ENCODE measurements at regions of chr14 and their contacts with region 1.

Region 1: DNA sequence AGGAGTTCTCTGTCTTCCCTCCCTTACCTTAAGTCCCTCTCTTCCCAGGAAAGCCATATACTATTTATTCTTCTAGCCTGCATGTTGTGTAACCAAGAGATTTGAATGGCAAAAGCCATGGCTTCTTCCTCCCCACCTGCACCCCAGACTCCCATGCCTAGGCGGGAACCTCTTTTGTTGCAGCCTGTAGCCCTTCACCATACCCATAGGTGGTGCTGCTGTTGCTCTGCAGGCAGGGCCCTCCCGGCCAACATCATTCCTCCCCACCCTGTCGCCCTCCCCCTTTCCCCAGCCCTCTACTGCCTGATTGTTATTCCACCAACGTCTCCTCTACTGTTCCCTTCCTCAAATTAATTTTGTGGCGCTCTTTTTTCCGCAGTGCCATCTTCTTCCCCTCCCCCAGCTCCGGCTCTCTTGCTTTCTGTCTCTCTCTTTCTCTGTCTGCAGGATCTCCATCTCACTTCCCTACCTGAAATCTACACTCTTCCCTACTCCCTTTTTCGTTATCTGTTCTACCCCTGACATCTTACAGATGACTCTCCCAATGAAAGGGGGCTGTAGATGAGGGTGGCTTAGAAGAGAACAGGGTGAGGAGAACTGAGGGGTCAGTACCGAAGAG is 13.8 kb downstream of the NGDN start:
- DNase-seq: no peak
- ATAC-seq: no peak
- H3K4me3 ChIP-seq: no peak overlapping the region
- H3K27ac ChIP-seq: no peak overlapping the region
- H3K4me1 ChIP-seq: peaks cover 0 to 4% (median 0%) of the 10 kb centered on the region in 12 donors
- H3K27me3 ChIP-seq: no peaks in the 10 kb centered on the region
- CTCF ChIP-seq: peak in 3 of 12 donors; percentile 22 to 27 (median 23)
- POLR2A ChIP-seq: no peak

Region 2: DNA sequence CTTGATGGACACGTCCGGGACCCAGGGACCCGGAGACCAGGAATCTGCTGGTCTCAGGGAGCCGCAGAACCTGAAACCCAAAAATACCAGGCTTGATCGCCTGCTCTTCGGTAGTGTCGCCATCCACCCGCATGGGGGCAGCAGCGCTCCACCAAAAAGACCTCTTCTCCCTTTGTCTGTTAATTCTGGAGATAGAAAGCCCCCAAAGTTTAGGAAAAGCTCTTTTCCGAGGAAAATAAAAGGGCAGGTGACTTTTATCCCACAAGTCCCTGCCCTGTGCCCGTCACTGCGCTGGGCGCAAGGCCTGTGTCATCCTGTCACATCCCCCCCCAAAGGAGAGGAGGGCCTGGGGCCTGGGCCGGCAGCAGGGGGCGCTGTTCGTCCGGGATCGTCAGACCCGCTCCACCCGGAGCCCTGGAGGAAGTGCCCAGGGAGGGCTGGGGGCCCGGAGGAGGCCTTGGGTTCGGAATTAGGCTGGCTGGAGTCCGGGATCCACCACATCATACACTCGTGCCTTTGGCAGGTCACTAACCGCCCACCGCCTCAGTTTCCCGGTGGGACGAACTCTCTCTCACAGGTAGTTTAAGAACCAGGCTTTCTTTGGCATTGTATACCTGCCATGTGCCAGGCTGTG is 926.2 kb before region 1 on chr14:
- intact Hi-C with region 1: no loop called
- DNase-seq: peak; percentile 76 to 95 (median 86)
- ATAC-seq: peak; percentile 84 to 89 (median 87)
- H3K4me3 ChIP-seq: peak overlapping the region in 10 of 12 donors; percentile 29 to 52 (median 42)
- H3K27ac ChIP-seq: peak overlapping the region in 11 of 12 donors; percentile 3 to 83 (median 55)
- H3K4me1 ChIP-seq: peaks cover 0 to 70% (median 30%) of the 10 kb centered on the region in 12 donors
- H3K27me3 ChIP-seq: no peaks in the 10 kb centered on the region
- CTCF ChIP-seq: peak in 10 of 12 donors; percentile 93 to 100 (median 98)
- POLR2A ChIP-seq: peak in 1 of 2 donors; percentile 22

Region 3: GRCh38 chr14:23057757-23058653 is 425.3 kb before region 1 on chr14:
- intact Hi-C with region 1: no loop called
- DNase-seq: peak; percentile 84 to 91 (median 88)
- ATAC-seq: peak; percentile 73 to 77 (median 74)
- H3K4me3 ChIP-seq: peak overlapping the region; percentile 46 to 84 (median 68)
- H3K27ac ChIP-seq: peak overlapping the region in 10 of 12 donors; percentile 39 to 77 (median 58)
- H3K4me1 ChIP-seq: peaks cover 0 to 39% (median 25%) of the 10 kb centered on the region in 12 donors
- H3K27me3 ChIP-seq: no peaks in the 10 kb centered on the region
- CTCF ChIP-seq: peak; percentile 92 to 96 (median 94)
- POLR2A ChIP-seq: no peak

Region 4: GRCh38 chr14:23539248-23540140 is 56.1 kb after region 1 on chr14:
- intact Hi-C with region 1: loop called in 1 of 10 experiments (anchors 10 kb)
- DNase-seq: no peak
- ATAC-seq: peak in 3 of 4 donors; percentile 61 to 70 (median 65)
- H3K4me3 ChIP-seq: no peak overlapping the region
- H3K27ac ChIP-seq: no peak overlapping the region
- H3K4me1 ChIP-seq: peaks cover 0 to 5% (median 2%) of the 10 kb centered on the region in 12 donors
- H3K27me3 ChIP-seq: no peaks in the 10 kb centered on the region
- CTCF ChIP-seq: peak; percentile 56 to 77 (median 70)
- POLR2A ChIP-seq: no peak

Region 5: GRCh38 chr14:23555882-23556699 is 72.7 kb after region 1 on chr14 and contains the start of gene THTPA:
- intact Hi-C with region 1: loop called in 5 of 10 experiments (anchors 1 to 5 kb)
- DNase-seq: peak; percentile 93 to 97 (median 95)
- ATAC-seq: peak; percentile 86 to 96 (median 94)
- H3K4me3 ChIP-seq: peak within 1 kb of the TSS; percentile 56 to 100 (median 92)
- H3K27ac ChIP-seq: peak within 1 kb of the TSS; percentile 90 to 100 (median 97)
- H3K4me1 ChIP-seq: peaks cover 0 to 35% (median 21%) of the 10 kb centered on the region in 12 donors
- H3K27me3 ChIP-seq: no peaks in the 10 kb centered on the region
- CTCF ChIP-seq: no peak
- POLR2A ChIP-seq: peak in 1 of 2 donors; percentile 52
- total RNA-seq, gene THTPA: 13.0 to 30.9 (median 18.9) TPM

Region 6: GRCh38 chr14:23561873-23562267 is 78.5 kb after region 1 on chr14:
- intact Hi-C with region 1: loop called (anchors 1 to 5 kb)
- DNase-seq: no peak
- ATAC-seq: peak in 1 of 4 donors; percentile 12
- H3K4me3 ChIP-seq: no peak overlapping the region
- H3K27ac ChIP-seq: no peak overlapping the region
- H3K4me1 ChIP-seq: peaks cover 0 to 24% (median 9%) of the 10 kb centered on the region in 12 donors
- H3K27me3 ChIP-seq: no peaks in the 10 kb centered on the region
- CTCF ChIP-seq: no peak
- POLR2A ChIP-seq: no peak

Measured in heart left ventricle (tissue), 16 donors.